Natural killer cell (primary cell): ENCODE measurements at regions of chr11 and their contacts with region 1.

Region 1: DNA sequence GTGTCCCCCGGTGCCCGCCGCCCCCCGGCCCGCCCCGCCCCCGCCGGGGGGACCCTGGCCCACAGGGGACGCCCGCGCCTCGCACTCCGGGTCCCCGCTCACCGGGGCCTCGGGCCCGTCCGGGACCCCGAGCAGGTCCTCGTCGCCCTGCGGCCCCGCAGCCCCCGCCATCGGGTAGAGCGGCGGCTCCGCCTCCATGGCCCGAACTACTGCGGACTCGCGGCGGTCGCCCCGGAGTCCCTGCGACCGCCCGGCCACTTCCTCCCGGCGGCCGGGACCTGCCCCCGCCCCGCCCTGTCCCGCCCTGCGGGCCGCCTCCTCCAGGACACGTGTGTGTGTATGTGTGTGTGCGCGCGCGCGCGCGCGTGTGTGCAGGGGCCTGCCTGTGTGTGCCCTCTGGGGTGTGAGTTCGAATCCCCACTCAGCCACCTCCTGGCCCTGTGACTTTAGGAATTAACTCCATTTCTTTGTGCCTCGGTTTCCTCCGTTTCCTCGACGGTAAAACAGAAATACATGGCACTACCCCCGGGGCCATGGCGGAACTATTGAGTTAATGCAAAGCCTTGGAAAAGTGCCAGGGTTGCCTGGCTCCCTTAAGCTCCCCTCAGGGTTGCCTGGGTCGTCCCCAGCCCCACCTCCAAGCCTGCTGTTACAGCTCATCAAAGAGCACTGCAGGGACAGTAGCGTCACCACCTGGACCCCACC is at the start of gene UNC93B1:
- DNase-seq: peak; percentile 74 to 84
- ATAC-seq: peak; percentile 91 to 95 (median 94)
- H3K4me3 ChIP-seq: peak within 1 kb of the TSS; percentile 35
- H3K4me3 Mint-ChIP-seq: peak within 1 kb of the TSS; percentile 91
- H3K27ac ChIP-seq: peak within 1 kb of the TSS; percentile 22
- H3K27ac Mint-ChIP-seq: peak within 1 kb of the TSS; percentile 59 to 79
- H3K4me1 ChIP-seq: peaks cover 60% of the 10 kb centered on the region
- H3K4me1 Mint-ChIP-seq: peaks cover 2 to 24% of the 10 kb centered on the region in 2 donors
- H3K27me3 ChIP-seq: no peaks in the 10 kb centered on the region
- H3K27me3 Mint-ChIP-seq: no peaks in the 10 kb centered on the region
- CTCF ChIP-seq: no peak
- total RNA-seq, gene UNC93B1: 26.6 to 44.3 (median 39.7) TPM

Region 2: DNA sequence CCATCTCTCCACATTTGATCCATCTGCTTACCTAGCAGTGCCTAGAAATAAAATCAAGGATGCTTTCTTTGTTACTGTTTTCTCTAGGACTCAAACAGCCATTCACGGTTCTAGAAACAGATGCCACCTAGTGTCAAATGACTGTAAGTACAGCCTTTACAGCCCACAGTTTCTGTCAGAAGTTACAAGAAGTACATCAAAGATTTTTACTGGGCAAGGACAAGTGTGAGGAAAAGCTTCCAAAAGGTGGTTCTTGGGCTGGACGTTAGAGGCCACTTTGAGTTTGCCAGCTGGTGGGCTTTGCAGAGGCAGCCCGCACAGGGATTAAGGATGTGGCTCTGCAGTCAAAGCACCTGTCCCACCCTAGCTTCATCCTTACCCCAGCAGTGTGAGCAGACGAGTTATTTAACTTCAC is 202.2 kb after region 1 on chr11:
- intact Hi-C with region 1: loop called (anchors 10 kb)
- DNase-seq: peak in 1 of 2 donors; percentile 76
- ATAC-seq: peak; percentile 76 to 85 (median 81)
- H3K4me3 ChIP-seq: no peak overlapping the region
- H3K4me3 Mint-ChIP-seq: peak overlapping the region; percentile 53
- H3K27ac ChIP-seq: no peak overlapping the region
- H3K27ac Mint-ChIP-seq: peak overlapping the region in 1 of 2 donors; percentile 55
- H3K4me1 ChIP-seq: peaks cover 34% of the 10 kb centered on the region
- H3K4me1 Mint-ChIP-seq: peaks cover 71 to 76% of the 10 kb centered on the region in 2 donors
- H3K27me3 ChIP-seq: no peaks in the 10 kb centered on the region
- H3K27me3 Mint-ChIP-seq: no peaks in the 10 kb centered on the region
- CTCF ChIP-seq: peak; percentile 86